Naive thymus-derived CD4-positive, alpha-beta T cell (primary cell): ENCODE measurements at regions of chr1 and their contacts with region 1.

Region 1: DNA sequence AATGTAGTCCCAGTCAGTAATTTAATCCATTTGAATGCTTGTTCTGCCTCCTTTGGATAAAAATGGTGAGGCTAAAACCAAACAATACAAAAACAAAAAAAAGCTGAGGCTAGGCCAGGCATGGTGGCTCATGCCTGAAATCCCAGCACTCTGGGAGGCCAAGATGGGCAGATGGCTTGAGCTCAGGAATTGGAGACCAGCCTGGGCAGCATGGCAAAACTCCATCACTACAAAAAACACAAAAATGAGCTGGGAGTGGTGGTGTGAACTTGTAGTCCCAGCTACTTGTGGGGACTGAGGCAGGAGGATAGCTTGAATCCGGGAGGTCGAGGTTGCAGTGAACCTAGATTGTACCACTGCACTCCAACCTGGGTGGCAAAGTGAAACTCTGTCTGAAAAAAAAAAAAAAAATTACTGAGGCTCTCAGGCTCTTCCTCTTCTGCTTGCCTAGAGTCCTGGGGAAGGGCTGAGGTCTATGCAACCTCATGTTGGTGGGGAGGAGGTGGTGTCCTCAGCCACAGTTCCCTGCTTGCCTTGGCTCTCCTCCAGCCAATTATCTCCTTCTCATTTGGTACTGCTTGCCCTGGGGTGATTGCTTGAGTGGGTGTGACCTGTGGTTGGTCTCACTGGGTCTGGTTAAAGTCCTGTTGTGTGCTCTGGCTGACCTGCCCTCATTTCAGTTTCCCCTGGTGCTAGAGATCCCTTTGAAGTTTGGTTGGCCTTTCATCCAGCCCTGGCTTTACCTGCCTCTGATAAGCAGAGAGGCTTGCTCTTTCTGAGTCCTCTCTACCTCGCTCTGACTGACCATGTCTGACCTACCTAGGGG is 20.9 kb downstream of the S1PR1 start:
- DNase-seq: peak in 2 of 9 donors; percentile 7 to 42
- ATAC-seq: peak; percentile 87
- H3K4me3 ChIP-seq: no peak overlapping the region
- H3K4me3 Mint-ChIP-seq: peak overlapping the region in 9 of 10 donors; percentile 34 to 77 (median 60)
- H3K27ac ChIP-seq: peak overlapping the region; percentile 53
- H3K27ac Mint-ChIP-seq: peak overlapping the region; percentile 26 to 92 (median 83)
- H3K4me1 ChIP-seq: peaks cover 49 to 54% of the 10 kb centered on the region in 2 donors
- H3K4me1 Mint-ChIP-seq: peaks cover 43 to 76% (median 67%) of the 10 kb centered on the region in 7 donors
- H3K27me3 ChIP-seq: no peaks in the 10 kb centered on the region
- H3K27me3 Mint-ChIP-seq: no peaks in the 10 kb centered on the region

Region 2: DNA sequence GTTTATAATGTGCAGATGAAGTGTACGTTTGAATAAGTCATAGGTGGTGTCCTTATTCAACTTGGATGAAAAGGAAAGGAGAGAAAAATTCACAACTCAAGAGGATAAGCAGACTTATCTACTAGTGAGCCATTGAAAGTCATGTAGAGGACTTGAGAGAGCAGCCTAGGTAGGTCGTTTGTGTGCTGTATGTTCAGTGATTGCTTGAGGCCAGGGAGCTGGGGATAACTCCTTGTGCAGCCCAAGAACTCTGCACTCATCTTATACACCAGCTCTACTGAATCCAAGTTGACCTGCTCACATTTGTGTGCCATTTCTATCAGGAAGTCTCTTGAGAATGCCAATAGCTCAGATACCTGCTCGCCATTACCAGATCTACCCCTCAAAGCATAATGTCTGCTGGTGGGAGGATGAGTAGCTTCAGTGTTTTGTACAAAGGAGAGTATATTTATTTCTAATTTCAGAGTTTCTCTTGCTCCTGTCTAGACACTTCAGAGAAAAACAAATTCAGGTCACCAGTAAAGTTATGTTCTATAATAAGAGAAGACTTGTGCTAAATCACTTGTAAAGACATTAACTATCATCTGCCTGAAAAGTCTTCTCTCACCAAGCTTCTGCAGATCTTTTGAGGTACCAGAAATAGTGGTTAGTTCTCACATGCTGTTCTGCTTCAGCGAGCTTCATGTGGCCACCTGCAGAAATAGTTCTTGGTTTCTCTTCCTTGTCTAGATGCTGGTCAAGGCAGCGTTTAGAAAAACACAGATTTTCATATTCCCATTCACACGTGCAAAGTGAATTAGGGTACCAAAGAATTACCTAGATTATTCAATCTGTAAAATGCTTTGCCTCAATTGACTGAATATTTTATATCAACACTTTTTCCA is 10.1 kb before region 1 on chr1:
- CTCF ChIA-PET with region 1: interaction called, 3 read pairs
- POLR2A ChIA-PET with region 1: interaction called, 101 read pairs
- intact Hi-C with region 1: loop called in 1 of 2 experiments (anchors 1 kb)
- DNase-seq: no peak
- ATAC-seq: peak; percentile 54
- H3K4me3 ChIP-seq: no peak overlapping the region
- H3K4me3 Mint-ChIP-seq: peak overlapping the region in 9 of 10 donors; percentile 3 to 77 (median 42)
- H3K27ac ChIP-seq: peak overlapping the region; percentile 25
- H3K27ac Mint-ChIP-seq: peak overlapping the region in 8 of 9 donors; percentile 28 to 100 (median 73)
- H3K4me1 ChIP-seq: peaks cover 14 to 56% of the 10 kb centered on the region in 2 donors
- H3K4me1 Mint-ChIP-seq: peaks cover 26 to 93% (median 79%) of the 10 kb centered on the region in 7 donors
- H3K27me3 ChIP-seq: no peaks in the 10 kb centered on the region
- H3K27me3 Mint-ChIP-seq: no peaks in the 10 kb centered on the region